ENCODE measurements at regions of chr20 and their contacts with region 1.

Region 1: GRCh38 chr20:45095753-45096371 is 5.1 kb downstream of the KCNS1 start:
- DNase-seq: peak; percentile 74
- H3K4me3 Mint-ChIP-seq: no peak overlapping the region
- H3K27ac Mint-ChIP-seq: peak overlapping the region; percentile 17
- H3K4me1 Mint-ChIP-seq: peaks cover 11% of the 10 kb centered on the region
- H3K27me3 Mint-ChIP-seq: peaks cover 52% of the 10 kb centered on the region

Region 2: DNA sequence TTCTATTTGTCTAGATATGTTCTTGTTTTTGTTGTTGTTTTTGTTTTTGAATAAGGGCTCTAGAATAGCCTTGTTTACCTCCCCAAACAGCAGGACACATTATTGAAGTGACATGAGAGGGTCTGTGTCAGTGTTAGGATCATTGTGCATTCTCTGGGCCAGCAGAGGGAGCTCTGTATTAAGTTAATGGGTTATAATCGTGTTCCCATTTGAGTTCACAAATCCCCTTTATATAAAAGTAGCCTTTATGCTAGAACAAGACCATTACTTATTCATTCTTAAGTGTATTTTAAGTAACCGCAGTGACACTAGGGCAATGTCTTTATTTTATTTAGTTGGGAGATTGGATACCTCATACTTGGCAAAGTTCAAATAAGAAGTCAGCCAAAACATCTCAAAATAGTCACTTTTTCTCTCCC is 84.7 kb before region 1 on chr20:
- CTCF ChIA-PET with region 1: interaction called, 34 read pairs
- DNase-seq: peak; percentile 51
- H3K4me3 Mint-ChIP-seq: no peak overlapping the region
- H3K27ac Mint-ChIP-seq: no peak overlapping the region
- H3K4me1 Mint-ChIP-seq: peaks cover 24% of the 10 kb centered on the region
- H3K27me3 Mint-ChIP-seq: no peaks in the 10 kb centered on the region

Region 3: GRCh38 chr20:45052698-45053429 is 43.0 kb before region 1 on chr20:
- CTCF ChIA-PET with region 1: interaction called, 49 read pairs
- DNase-seq: peak; percentile 37
- H3K4me3 Mint-ChIP-seq: no peak overlapping the region
- H3K27ac Mint-ChIP-seq: peak overlapping the region; percentile 81
- H3K4me1 Mint-ChIP-seq: peaks cover 60% of the 10 kb centered on the region
- H3K27me3 Mint-ChIP-seq: no peaks in the 10 kb centered on the region

Region 4: GRCh38 chr20:45083127-45083526 is 12.7 kb before region 1 on chr20:
- CTCF ChIA-PET with region 1: interaction called, 12 read pairs
- DNase-seq: no peak
- H3K4me3 Mint-ChIP-seq: no peak overlapping the region
- H3K27ac Mint-ChIP-seq: peak overlapping the region; percentile 5
- H3K4me1 Mint-ChIP-seq: no peaks in the 10 kb centered on the region
- H3K27me3 Mint-ChIP-seq: no peaks in the 10 kb centered on the region

Region 5: GRCh38 chr20:45235995-45236394 is 140.1 kb after region 1 on chr20:
- CTCF ChIA-PET with region 1: no interaction called
- DNase-seq: no peak
- H3K4me3 Mint-ChIP-seq: no peak overlapping the region
- H3K27ac Mint-ChIP-seq: no peak overlapping the region
- H3K4me1 Mint-ChIP-seq: no peaks in the 10 kb centered on the region
- H3K27me3 Mint-ChIP-seq: peaks cover 27% of the 10 kb centered on the region

Region 6: DNA sequence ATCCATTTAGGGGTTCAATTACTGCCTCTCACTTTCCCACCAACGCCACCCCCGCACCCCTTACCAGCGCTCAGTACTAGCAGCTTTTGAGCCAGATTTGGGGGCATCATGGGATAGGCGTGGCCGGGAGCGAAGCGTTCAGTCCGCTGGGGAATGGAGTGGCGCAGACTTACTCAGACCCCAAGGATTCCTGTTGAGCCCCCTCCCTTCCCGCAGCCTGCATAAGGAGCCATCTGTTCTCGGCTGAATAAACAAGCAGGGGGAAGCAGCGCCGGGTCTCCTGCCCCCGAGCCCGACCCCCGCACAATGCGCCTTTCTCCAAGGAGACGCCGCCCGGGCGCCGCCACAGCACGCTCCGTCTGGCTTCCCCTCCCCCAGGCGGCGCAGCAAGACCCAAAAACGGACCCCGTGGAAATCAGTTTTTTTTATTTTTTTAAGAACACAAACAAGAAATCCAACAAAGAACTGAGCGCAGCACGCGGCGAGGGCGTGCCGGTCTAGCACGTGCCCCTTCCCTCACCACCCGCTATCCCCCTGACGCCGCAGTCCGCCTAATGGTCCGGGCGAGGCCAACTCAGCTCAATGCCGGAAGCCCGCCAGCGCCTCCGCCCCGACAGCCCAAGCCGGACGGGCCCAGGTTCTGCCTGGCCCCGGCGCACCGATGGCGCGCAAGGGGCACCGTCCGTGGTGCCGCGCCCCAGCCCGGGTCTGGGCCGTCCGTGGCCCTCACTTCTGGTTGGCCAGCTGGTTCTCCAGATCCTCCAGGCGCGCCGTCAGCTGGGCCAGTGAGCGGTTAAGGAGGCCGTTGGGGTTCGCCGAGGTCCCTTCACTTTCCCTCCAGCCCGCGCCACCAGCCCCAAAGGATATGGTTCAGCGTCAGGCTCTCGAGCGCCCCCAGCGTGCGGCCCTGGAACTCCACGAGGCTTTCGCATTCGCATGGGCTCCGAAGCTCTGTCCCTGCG is 197.5 kb after region 1 on chr20:
- CTCF ChIA-PET with region 1: interaction called, 63 read pairs
- DNase-seq: peak; percentile 87
- H3K4me3 Mint-ChIP-seq: peak overlapping the region; percentile 64
- H3K27ac Mint-ChIP-seq: no peak overlapping the region
- H3K4me1 Mint-ChIP-seq: peaks cover 7% of the 10 kb centered on the region
- H3K27me3 Mint-ChIP-seq: peaks cover 59% of the 10 kb centered on the region